ENCODE measurements at regions of chr11 and their contacts with region 1.

Region 1: DNA sequence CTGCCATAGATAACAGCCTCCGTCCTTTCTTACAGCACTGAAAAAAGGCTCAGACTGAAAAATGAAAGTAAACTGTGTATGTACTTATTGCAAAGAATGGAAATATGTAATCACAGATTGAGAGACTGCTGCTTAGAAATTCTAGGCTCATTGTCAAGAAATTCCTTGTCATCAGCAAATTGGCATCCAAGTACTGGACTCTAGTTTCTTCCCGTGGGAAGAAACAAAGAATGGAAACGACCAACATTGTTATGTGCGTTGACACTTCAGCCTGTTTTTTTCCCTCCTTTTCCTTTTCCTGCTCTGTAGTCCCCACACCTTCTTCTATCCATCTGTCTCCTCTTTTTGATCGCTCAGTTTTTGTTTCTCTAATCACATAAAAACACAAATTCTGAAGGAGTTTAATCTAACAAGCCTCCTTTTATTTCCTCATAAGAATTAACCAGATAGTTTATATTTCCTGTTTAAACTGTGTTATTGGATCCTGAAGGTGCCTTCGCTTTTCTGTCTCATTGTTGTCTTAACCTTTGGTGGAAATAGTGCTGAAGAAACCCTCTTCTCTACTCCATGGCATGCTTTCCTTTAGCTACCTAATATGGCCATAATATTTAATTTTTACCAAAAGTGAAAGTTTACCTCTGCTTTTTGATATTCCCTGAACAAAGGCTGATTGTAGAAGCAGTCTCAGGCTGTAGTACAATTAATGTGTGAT is 20.0 kb upstream of the CASP12 start:
- DNase-seq: no peak
- H3K4me3 Mint-ChIP-seq: peak overlapping the region; percentile 83
- H3K27ac Mint-ChIP-seq: peak overlapping the region; percentile 74
- H3K4me1 Mint-ChIP-seq: peaks cover 42% of the 10 kb centered on the region
- H3K27me3 Mint-ChIP-seq: no peaks in the 10 kb centered on the region

Region 2: DNA sequence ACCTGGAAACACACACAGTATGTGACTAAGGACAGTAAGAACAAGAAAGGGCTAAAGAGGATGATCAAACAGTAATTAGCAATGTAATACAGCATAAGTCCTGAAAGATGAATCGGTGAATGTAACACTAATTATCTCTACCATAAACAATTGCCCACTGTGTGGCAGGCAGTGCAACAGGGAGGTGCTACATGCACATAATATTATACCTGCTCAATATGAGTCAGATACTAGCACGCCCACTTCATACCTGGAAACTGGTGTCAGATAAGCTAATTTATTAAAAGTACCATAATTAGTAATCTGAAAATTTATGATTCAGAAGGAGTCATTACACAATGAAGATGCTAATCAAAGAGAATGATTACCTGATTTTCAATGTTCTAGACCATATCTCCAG is 34.9 kb before region 1 on chr11:
- CTCF ChIA-PET with region 1: no interaction called
- POLR2A ChIA-PET with region 1: no interaction called
- DNase-seq: no peak
- H3K4me3 Mint-ChIP-seq: no peak overlapping the region
- H3K27ac Mint-ChIP-seq: no peak overlapping the region
- H3K4me1 Mint-ChIP-seq: peaks cover 6% of the 10 kb centered on the region
- H3K27me3 Mint-ChIP-seq: no peaks in the 10 kb centered on the region

Region 3: GRCh38 chr11:104897891-104898684 is 20.2 kb before region 1 on chr11 and contains the start of gene CASP12:
- CTCF ChIA-PET with region 1: interaction called, 3 read pairs
- POLR2A ChIA-PET with region 1: interaction called, 28 read pairs
- DNase-seq: no peak
- H3K4me3 Mint-ChIP-seq: peak within 1 kb of the TSS; percentile 78
- H3K27ac Mint-ChIP-seq: peak within 1 kb of the TSS; percentile 81
- H3K4me1 Mint-ChIP-seq: peaks cover 34% of the 10 kb centered on the region
- H3K27me3 Mint-ChIP-seq: no peaks in the 10 kb centered on the region
- total RNA-seq, gene CASP12: 0.50 to 0.83 TPM

Measured in activated CD4-positive, alpha-beta memory T cell treated with anti-CD3 and anti-CD28 coated beads, Interleukin-2, amount 10 ng/mL, durations not matched to agents 7 days and 5 days (primary cell).